Activated CD4-positive, alpha-beta memory T cell treated with anti-CD3 and anti-CD28 coated beads for 36 hours (primary cell): ENCODE measurements at regions of chr3 and their contacts with region 1.

Region 1: DNA sequence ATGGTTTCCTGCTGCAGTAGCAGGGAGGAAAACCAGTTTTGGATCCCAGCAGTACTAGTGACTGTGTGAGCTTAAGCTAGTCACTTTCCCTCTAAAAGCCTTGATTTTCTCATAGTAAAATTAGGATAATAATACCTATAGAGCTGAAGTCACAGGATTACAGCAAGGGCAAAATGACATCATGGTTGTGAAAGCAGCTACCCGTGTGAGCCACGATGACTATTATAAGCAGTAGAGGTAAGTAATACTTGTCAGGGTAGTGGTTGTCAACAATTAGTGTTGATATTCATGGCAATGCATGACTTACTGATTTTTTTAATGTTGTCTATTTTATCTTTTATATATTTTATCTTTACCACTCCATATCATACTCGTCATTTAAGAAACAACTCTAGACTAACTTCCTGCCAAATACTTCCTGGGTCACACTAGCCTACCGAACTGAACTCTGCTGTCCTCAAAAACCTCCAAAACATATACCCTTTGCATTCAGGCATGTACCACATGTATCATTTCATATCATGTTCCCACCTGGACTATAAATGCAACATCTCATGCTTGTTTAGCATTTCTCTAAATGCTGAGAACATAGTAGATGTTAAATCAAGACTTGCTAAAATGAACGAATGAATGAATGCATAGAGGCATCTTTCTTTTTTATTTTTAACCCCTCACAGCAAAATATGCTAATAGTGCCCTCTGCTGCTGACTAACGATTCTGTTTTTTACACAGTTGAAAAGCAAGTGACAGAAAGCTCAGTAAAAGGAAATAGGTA is 172.6 kb downstream of the P3H2 start:
- DNase-seq: no peak
- H3K4me3 Mint-ChIP-seq: no peak overlapping the region
- H3K27ac Mint-ChIP-seq: no peak overlapping the region
- H3K4me1 Mint-ChIP-seq: peaks cover 3% of the 10 kb centered on the region
- H3K27me3 Mint-ChIP-seq: peaks cover 11% of the 10 kb centered on the region

Region 2: DNA sequence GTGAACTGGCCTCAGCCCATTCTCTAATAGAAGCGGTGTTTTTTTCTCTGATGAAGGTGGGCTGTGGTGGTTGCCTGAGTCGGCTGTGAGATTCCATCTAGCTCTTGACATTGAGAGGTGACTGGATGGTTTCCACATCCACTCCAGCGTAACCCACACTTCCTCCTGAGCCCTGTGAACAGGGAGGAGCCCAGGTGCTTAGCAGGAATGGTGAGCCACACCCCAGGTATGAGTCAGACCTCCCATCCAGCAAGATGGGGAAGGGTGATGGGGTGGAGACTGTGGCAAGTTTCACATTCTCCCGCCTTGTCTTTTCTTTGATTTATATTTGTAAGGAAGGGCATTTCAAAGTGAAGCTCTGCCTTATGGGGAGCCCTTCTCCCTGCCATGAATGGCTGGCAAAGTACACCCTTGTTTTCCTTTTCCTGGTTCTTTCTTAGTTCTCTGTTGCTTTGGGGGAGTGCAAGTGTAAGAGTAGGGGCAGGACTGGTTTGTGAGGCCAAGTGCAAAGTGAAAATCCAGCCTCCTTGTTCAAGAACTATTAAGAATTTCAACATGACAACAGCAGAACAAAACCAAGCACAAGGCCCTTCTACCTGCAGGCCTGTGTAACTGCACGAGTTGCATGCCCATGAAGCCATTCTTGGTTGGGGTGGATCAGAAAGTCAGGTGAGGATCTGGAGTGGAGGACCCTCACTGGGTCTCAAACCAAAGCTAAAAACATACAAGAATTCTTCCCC is 780.9 kb before region 1 on chr3:
- CTCF ChIA-PET with region 1: interaction called, 3 read pairs
- POLR2A ChIA-PET with region 1: no interaction called
- intact Hi-C with region 1: loop called (anchors 5 kb)
- DNase-seq: peak; percentile 11
- H3K4me3 Mint-ChIP-seq: no peak overlapping the region
- H3K27ac Mint-ChIP-seq: no peak overlapping the region
- H3K4me1 Mint-ChIP-seq: peaks cover 3% of the 10 kb centered on the region
- H3K27me3 Mint-ChIP-seq: no peaks in the 10 kb centered on the region

Region 3: GRCh38 chr3:189270248-189270832 is 677.8 kb before region 1 on chr3:
- CTCF ChIA-PET with region 1: interaction called, 100 read pairs
- POLR2A ChIA-PET with region 1: no interaction called
- intact Hi-C with region 1: loop called (anchors 1 kb)
- DNase-seq: peak; percentile 58
- H3K4me3 Mint-ChIP-seq: no peak overlapping the region
- H3K27ac Mint-ChIP-seq: no peak overlapping the region
- H3K4me1 Mint-ChIP-seq: peaks cover 13% of the 10 kb centered on the region
- H3K27me3 Mint-ChIP-seq: no peaks in the 10 kb centered on the region

Region 4: DNA sequence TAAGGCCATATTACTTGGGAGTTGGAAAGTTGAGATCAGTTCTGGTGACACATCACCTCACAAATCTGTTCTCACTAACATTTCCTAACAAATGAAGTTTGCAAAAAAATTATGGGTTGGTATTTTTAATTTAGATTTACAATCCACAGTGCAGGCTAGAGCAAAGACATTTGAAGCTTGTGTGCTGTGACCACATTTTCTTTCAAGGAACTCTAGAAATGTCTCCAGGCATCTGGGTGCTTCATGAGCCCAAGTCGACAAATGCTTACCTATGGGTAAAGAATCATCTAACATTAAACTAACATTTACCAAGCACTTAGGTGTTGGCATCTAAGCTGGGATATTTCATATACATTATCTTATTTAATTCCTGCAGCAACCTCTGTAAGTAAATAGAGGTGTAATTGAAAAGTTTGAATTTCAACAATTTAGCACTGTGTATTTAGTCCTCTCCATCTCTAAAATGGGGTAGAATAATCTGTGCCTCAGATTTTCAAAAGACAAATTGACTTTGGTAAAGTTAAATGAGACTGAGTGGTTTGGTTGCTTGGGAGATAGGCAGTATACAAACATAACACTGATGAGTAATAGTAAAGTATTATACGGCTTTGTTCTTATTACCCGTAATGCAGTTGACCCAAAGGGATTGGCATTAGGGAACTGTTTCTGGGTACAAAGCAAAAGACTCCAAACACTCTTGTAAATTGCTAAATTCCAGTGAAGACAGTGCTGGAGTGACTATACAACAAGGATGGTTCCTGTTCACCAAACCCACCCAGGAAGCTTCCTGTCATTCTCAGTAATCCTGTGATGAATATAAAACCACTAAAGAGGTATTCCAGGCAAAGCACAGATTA is 613.8 kb before region 1 on chr3:
- CTCF ChIA-PET with region 1: interaction called, 3 read pairs
- POLR2A ChIA-PET with region 1: no interaction called
- intact Hi-C with region 1: loop called (anchors 5 kb)
- DNase-seq: no peak
- H3K4me3 Mint-ChIP-seq: no peak overlapping the region
- H3K27ac Mint-ChIP-seq: no peak overlapping the region
- H3K4me1 Mint-ChIP-seq: peaks cover 40% of the 10 kb centered on the region
- H3K27me3 Mint-ChIP-seq: no peaks in the 10 kb centered on the region

Region 5: GRCh38 chr3:189629803-189630455 is 318.2 kb before region 1 on chr3:
- CTCF ChIA-PET with region 1: no interaction called
- POLR2A ChIA-PET with region 1: no interaction called
- intact Hi-C with region 1: loop called (anchors 10 kb)
- DNase-seq: no peak
- H3K4me3 Mint-ChIP-seq: peak overlapping the region; percentile 16
- H3K27ac Mint-ChIP-seq: no peak overlapping the region
- H3K4me1 Mint-ChIP-seq: peaks cover 25% of the 10 kb centered on the region
- H3K27me3 Mint-ChIP-seq: no peaks in the 10 kb centered on the region

Region 6: GRCh38 chr3:189927975-189928895 is 19.9 kb before region 1 on chr3:
- CTCF ChIA-PET with region 1: interaction called, 4 read pairs
- POLR2A ChIA-PET with region 1: no interaction called
- intact Hi-C with region 1: loop called (anchors 2 kb)
- DNase-seq: peak; percentile 14
- H3K4me3 Mint-ChIP-seq: no peak overlapping the region
- H3K27ac Mint-ChIP-seq: peak overlapping the region; percentile 19
- H3K4me1 Mint-ChIP-seq: peaks cover 22% of the 10 kb centered on the region
- H3K27me3 Mint-ChIP-seq: peaks cover 2% of the 10 kb centered on the region